ENCODE measurements at regions of chr1 and their contacts with region 1.

Region 1: GRCh38 chr1:221708987-221709386 is 32.9 kb downstream of the DUSP10 start:
- DNase-seq: peak; percentile 61
- ATAC-seq: no peak
- H3K4me3 Mint-ChIP-seq: no peak overlapping the region
- H3K27ac Mint-ChIP-seq: peak overlapping the region; percentile 90
- H3K4me1 Mint-ChIP-seq: peaks cover 63% of the 10 kb centered on the region
- H3K27me3 Mint-ChIP-seq: no peaks in the 10 kb centered on the region
- CTCF ChIP-seq: no peak

Region 2: DNA sequence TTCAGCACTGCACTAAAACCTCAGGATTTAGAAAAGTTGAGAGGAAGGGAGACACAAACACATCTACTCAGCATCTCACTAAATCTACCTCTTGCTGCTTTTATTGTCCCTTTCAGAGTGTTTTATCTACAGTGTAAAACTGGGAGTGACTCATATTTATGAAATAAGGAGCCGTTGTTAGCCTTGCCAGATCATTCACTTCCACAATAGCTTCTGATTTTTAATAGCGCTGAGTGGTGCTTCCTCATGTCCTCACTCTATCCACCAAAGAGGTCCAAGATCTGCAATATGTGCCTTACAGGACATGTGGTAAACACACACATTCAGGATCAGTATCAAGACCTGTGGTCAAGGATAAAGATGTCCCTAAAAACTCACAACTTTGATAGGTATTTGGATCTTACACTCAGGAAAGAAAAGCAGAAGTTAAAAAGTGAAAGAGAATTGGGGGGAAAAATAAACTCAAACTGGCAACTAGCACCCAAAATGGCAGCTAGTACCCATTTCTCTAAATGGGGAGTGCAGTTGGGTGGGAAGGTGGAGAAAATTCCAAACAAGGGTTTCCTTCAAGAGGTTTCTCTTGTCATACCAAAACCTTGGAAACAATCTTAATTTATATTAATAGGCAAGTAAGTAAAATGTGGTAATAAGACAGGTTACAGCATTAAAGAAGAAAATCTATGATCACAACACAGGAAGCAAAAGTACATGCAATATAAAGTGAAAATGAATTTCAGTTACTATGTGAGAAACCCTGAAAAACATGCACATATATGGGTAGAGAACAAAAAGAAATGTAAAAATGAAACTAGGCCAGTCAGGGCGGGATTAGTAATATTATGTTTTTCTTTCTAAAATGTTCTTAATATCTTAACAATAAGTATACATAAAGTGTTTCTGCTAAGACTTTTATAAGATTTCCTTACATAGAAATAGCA is 17.0 kb after region 1 on chr1:
- CTCF ChIA-PET with region 1: interaction called, 6 read pairs
- POLR2A ChIA-PET with region 1: interaction called, 5 read pairs
- intact Hi-C with region 1: loop called (anchors 2 kb)
- DNase-seq: no peak
- ATAC-seq: peak; percentile 78
- H3K4me3 Mint-ChIP-seq: peak overlapping the region; percentile 61
- H3K27ac Mint-ChIP-seq: peak overlapping the region; percentile 99
- H3K4me1 Mint-ChIP-seq: peaks cover 77% of the 10 kb centered on the region
- H3K27me3 Mint-ChIP-seq: no peaks in the 10 kb centered on the region
- CTCF ChIP-seq: no peak

Measured in activated CD8-positive, alpha-beta T cell treated with anti-CD3 and anti-CD28 coated beads for 36 hours (primary cell).